GM12878 (cell line): ENCODE measurements at regions of chr11 and their contacts with region 1.

Region 1: GRCh38 chr11:33161120-33162005 is at the start of gene CSTF3:
- DNase-seq: peak; percentile 74
- ATAC-seq: peak; percentile 92
- H3K4me3 ChIP-seq: peak within 1 kb of the TSS; percentile 91
- H3K27ac ChIP-seq: peak within 1 kb of the TSS; percentile 97
- H3K4me1 ChIP-seq: no peaks in the 10 kb centered on the region
- H3K27me3 ChIP-seq: no peaks in the 10 kb centered on the region
- CTCF ChIP-seq: peak; percentile 19 to 23 (median 19); a peak in 3 of 6 replicates
- EP300 ChIP-seq: no peak; a peak in 1 of 4 replicates
- POLR2A ChIP-seq: peak; percentile 80
- RAD21 ChIP-seq: no peak
- polyA plus RNA-seq, gene CSTF3: 42.0 to 50.1 TPM

Region 2: GRCh38 chr11:32953700-32954099 is 207.7 kb before region 1 on chr11:
- CTCF ChIA-PET with region 1: no interaction called
- POLR2A ChIA-PET with region 1: no interaction called
- RAD21 ChIA-PET with region 1: no interaction called
- SMC1A ChIA-PET with region 1: no interaction called
- in situ Hi-C with region 1: no loop called
- intact Hi-C with region 1: no loop called
- DNase-seq: no peak
- ATAC-seq: no peak
- H3K4me3 ChIP-seq: no peak overlapping the region
- H3K27ac ChIP-seq: no peak overlapping the region
- H3K4me1 ChIP-seq: no peaks in the 10 kb centered on the region
- H3K27me3 ChIP-seq: no peaks in the 10 kb centered on the region
- CTCF ChIP-seq: no peak
- EP300 ChIP-seq: no peak
- POLR2A ChIP-seq: no peak
- RAD21 ChIP-seq: no peak

Region 3: DNA sequence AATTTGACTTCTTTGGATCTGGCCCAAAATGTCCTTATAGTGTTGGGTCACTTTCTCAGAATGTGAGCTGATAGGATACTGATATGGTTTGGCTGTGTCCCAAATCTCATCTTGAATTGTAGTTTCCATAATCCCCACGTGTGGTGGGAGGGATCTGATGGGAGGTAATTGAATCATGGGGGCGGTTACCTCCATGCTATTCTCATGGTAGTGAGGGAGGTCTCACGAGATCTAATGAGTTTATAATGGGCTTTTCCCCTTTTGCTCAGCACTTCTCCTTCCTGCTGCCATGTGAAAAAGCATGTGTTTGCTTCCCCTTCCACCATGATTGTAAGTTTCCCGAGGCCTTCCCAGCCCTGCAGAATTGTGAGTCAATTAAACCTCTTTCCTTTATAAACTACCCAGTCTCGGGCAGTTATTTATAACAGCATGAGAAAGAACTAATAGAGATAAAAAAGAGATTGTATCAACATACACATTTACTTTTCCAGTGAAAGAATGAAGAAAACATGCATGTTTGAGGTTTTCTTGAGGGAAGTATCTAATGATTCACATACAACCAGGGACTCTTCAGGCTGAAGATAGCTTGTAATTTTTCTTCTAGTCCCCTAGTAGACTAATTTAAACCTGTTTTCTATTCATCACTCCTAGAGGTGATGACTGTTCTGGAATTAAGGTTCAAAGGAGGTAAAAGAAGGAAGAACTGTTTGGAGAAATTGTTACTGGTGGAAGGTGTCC is 17.2 kb after region 1 on chr11:
- CTCF ChIA-PET with region 1: interaction called, 17 read pairs
- POLR2A ChIA-PET with region 1: no interaction called
- RAD21 ChIA-PET with region 1: no interaction called
- SMC1A ChIA-PET with region 1: interaction called, 8 read pairs
- in situ Hi-C with region 1: no loop called
- intact Hi-C with region 1: no loop called
- DNase-seq: no peak
- ATAC-seq: no peak
- H3K4me3 ChIP-seq: no peak overlapping the region
- H3K27ac ChIP-seq: no peak overlapping the region
- H3K4me1 ChIP-seq: no peaks in the 10 kb centered on the region
- H3K27me3 ChIP-seq: no peaks in the 10 kb centered on the region
- CTCF ChIP-seq: no peak
- EP300 ChIP-seq: no peak
- POLR2A ChIP-seq: no peak
- RAD21 ChIP-seq: no peak

Region 4: GRCh38 chr11:33257897-33258630 is 96.7 kb after region 1 on chr11:
- CTCF ChIA-PET with region 1: interaction called, 11 read pairs
- POLR2A ChIA-PET with region 1: no interaction called
- RAD21 ChIA-PET with region 1: interaction called, 5 read pairs
- SMC1A ChIA-PET with region 1: no interaction called
- in situ Hi-C with region 1: no loop called
- intact Hi-C with region 1: loop called (anchors 2 kb)
- DNase-seq: no peak
- ATAC-seq: peak; percentile 62
- H3K4me3 ChIP-seq: peak overlapping the region; percentile 76
- H3K27ac ChIP-seq: peak overlapping the region; percentile 98
- H3K4me1 ChIP-seq: peaks cover 5% of the 10 kb centered on the region; the same call in 1 of the 2 replicates
- H3K27me3 ChIP-seq: no peaks in the 10 kb centered on the region
- CTCF ChIP-seq: peak; percentile 16 to 38 (median 17); a peak in 2 of 6 replicates
- EP300 ChIP-seq: no peak
- POLR2A ChIP-seq: peak; percentile 86
- RAD21 ChIP-seq: no peak

Region 5: DNA sequence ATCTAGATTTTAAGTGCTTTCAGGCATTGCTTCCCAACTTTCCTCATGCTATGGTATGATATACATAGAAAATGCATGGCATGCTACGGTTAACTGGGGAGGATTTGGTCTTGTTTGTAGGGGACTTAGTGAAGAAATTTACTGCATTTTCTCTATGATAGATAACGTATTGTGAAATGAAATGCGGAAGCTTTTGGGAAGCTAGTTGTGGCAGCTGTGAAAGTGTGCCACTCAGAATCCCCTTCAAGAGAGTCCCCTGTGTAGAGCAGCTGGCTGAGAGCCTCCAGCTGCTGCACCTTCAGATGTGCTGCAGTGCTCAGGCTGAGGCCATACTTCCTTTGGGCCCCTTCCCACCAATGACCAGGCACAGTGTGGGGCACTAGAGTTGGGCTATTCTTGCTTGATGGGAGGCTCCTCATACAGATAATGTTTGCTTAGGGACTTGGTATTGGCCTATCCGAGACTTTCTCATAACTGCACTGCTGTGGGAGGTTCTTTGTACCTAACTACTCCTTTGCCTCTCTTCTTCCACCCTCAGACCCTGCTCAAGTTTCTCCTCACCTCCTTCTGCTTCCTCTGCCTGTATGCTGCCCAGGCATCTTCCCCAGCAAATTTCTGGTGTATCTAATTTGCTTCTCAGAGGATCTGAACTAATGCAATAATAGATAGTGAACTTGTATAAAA is 163.1 kb after region 1 on chr11:
- CTCF ChIA-PET with region 1: interaction called, 134 read pairs
- POLR2A ChIA-PET with region 1: interaction called, 3 read pairs
- RAD21 ChIA-PET with region 1: interaction called, 37 read pairs
- SMC1A ChIA-PET with region 1: interaction called, 65 read pairs
- in situ Hi-C with region 1: no loop called
- intact Hi-C with region 1: loop called (anchors 1 kb)
- DNase-seq: no peak
- ATAC-seq: peak; percentile 78
- H3K4me3 ChIP-seq: no peak overlapping the region
- H3K27ac ChIP-seq: peak overlapping the region; percentile 53
- H3K4me1 ChIP-seq: peaks cover 26% of the 10 kb centered on the region
- H3K27me3 ChIP-seq: no peaks in the 10 kb centered on the region
- CTCF ChIP-seq: no peak
- EP300 ChIP-seq: no peak
- POLR2A ChIP-seq: no peak
- RAD21 ChIP-seq: no peak

Region 6: DNA sequence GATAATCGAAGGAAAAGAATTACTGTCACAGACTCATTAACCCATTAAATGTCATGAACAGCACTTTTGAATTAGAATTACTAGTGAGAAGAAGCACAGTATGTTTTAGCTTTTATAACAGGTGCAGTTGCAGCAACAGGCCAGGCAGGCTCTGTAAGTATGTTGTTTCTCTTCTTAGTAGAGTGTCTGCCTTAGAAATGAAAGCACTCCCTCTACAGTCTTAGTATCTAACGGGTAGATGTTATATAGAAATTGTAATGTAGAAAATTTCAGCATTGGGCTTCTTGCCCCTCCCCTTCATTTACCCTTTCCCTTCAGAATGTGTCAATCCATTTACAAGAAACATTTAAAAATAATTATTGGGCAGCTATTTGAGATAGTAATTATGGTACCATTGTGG is 183.2 kb after region 1 on chr11:
- CTCF ChIA-PET with region 1: interaction called, 25 read pairs
- POLR2A ChIA-PET with region 1: no interaction called
- RAD21 ChIA-PET with region 1: interaction called, 3 read pairs
- SMC1A ChIA-PET with region 1: interaction called, 14 read pairs
- in situ Hi-C with region 1: no loop called
- intact Hi-C with region 1: no loop called
- DNase-seq: no peak
- ATAC-seq: peak; percentile 48
- H3K4me3 ChIP-seq: no peak overlapping the region
- H3K27ac ChIP-seq: no peak overlapping the region
- H3K4me1 ChIP-seq: no peaks in the 10 kb centered on the region
- H3K27me3 ChIP-seq: no peaks in the 10 kb centered on the region
- CTCF ChIP-seq: peak in 1 of 3 experiments; percentile 12; a peak in 1 of 6 replicates
- EP300 ChIP-seq: no peak
- POLR2A ChIP-seq: no peak
- RAD21 ChIP-seq: no peak